CD4-positive, alpha-beta memory T cell (primary cell): ENCODE measurements at regions of chr5 and their contacts with region 1.

Region 1: DNA sequence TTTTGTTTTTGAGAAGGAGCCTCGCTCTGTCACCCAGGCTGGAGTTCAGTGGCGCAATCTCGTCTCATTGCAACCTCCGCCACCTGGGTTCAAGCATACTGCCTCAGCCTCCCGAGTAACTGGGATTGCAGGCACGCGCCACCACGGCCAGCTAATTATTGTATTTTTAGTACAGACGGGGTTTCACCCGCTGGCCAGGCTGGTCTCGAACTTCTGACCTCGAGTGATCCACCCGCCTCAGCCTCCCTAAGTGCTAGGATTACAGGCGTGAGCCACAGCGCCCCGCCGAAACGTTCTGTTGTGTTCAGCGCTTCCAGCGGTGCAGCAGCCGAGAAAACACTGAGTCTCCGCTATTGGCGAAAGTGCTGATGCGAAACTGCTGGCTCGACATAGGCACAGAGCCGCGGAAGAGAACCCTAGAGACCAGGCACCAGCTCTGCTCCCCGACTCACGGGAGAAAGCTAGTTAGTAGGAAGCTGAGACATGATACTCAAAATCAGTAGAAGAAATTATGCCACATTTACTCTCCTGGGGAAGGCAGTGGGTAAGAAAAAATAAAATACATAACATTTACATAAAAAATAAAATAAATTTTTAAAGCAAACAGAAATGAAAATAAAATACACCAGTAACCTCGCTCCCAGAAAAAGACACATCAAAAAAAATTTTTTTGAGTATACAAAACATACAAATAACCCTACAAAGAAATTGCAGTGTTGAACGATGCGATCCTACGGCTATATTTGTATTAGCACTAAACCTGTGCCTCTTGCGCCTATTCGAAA is 31.6 kb downstream of the ANXA2R start:
- DNase-seq: peak; percentile 89 to 92 (median 90)
- H3K4me3 ChIP-seq: peak overlapping the region; percentile 66 to 84
- H3K4me3 Mint-ChIP-seq: peak overlapping the region; percentile 84 to 94 (median 91)
- H3K27ac ChIP-seq: peak overlapping the region; percentile 85
- H3K27ac Mint-ChIP-seq: peak overlapping the region; percentile 90 to 99 (median 97)
- H3K4me1 ChIP-seq: peaks cover 38% of the 10 kb centered on the region
- H3K4me1 Mint-ChIP-seq: peaks cover 19 to 48% (median 33%) of the 10 kb centered on the region in 4 donors
- H3K27me3 ChIP-seq: no peaks in the 10 kb centered on the region
- H3K27me3 Mint-ChIP-seq: no peaks in the 10 kb centered on the region

Region 2: DNA sequence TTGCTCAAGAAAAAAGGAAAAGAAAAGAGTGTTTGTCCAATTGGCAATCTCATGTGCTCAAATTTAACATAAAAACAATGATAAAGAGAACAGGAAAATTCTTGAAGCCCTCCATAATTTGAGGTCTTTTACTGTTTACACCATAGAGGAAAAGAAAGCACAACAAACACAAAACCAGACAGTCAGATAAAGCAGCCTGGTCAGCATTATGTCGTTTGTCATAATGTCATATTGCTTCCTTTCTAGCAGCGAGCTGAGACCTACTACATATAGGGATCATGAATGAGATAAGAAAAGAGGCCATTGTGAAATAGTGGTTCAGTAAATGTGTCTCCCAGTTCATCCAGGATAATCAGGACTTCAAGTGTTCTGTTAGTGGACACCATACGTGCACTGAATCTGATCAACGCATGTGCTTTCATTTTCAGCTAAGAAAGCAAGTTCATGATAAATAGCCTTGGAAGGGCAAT is 132.2 kb before region 1 on chr5:
- CTCF ChIA-PET with region 1: no interaction called
- POLR2A ChIA-PET with region 1: no interaction called
- intact Hi-C with region 1: no loop called
- DNase-seq: no peak
- H3K4me3 ChIP-seq: no peak overlapping the region
- H3K4me3 Mint-ChIP-seq: peak overlapping the region in 4 of 8 donors; percentile 13 to 37 (median 34)
- H3K27ac ChIP-seq: no peak overlapping the region
- H3K27ac Mint-ChIP-seq: peak overlapping the region in 1 of 7 donors; percentile 42
- H3K4me1 ChIP-seq: peaks cover 8% of the 10 kb centered on the region
- H3K4me1 Mint-ChIP-seq: peaks cover 0 to 12% (median 6%) of the 10 kb centered on the region in 4 donors
- H3K27me3 ChIP-seq: no peaks in the 10 kb centered on the region
- H3K27me3 Mint-ChIP-seq: peaks cover 3 to 6% of the 10 kb centered on the region in 2 donors

Region 3: GRCh38 chr5:43019614-43020293 is 11.2 kb after region 1 on chr5:
- CTCF ChIA-PET with region 1: interaction called, 149 read pairs
- POLR2A ChIA-PET with region 1: interaction called, 893 read pairs
- intact Hi-C with region 1: loop called (anchors 1 kb)
- DNase-seq: peak; percentile 84 to 94 (median 91)
- H3K4me3 ChIP-seq: peak overlapping the region; percentile 73 to 83
- H3K4me3 Mint-ChIP-seq: peak overlapping the region; percentile 94 to 99 (median 98)
- H3K27ac ChIP-seq: peak overlapping the region; percentile 94
- H3K27ac Mint-ChIP-seq: peak overlapping the region; percentile 99 to 100 (median 100)
- H3K4me1 ChIP-seq: peaks cover 40% of the 10 kb centered on the region
- H3K4me1 Mint-ChIP-seq: peaks cover 24 to 67% (median 34%) of the 10 kb centered on the region in 4 donors
- H3K27me3 ChIP-seq: no peaks in the 10 kb centered on the region
- H3K27me3 Mint-ChIP-seq: no peaks in the 10 kb centered on the region

Region 4: GRCh38 chr5:43040287-43041098 is 31.9 kb after region 1 on chr5 and contains the start of gene ANXA2R:
- CTCF ChIA-PET with region 1: interaction called, 64 read pairs
- POLR2A ChIA-PET with region 1: interaction called, 1,197 read pairs
- intact Hi-C with region 1: loop called (anchors 1 kb)
- DNase-seq: peak; percentile 94 to 97 (median 97)
- H3K4me3 ChIP-seq: peak within 1 kb of the TSS; percentile 78 to 99
- H3K4me3 Mint-ChIP-seq: peak within 1 kb of the TSS; percentile 97 to 100 (median 98)
- H3K27ac ChIP-seq: peak within 1 kb of the TSS; percentile 98
- H3K27ac Mint-ChIP-seq: peak within 1 kb of the TSS; percentile 99 to 100 (median 99)
- H3K4me1 ChIP-seq: peaks cover 50% of the 10 kb centered on the region
- H3K4me1 Mint-ChIP-seq: peaks cover 19 to 82% (median 39%) of the 10 kb centered on the region in 4 donors
- H3K27me3 ChIP-seq: no peaks in the 10 kb centered on the region
- H3K27me3 Mint-ChIP-seq: no peaks in the 10 kb centered on the region
- total RNA-seq, gene ANXA2R: 43.4 to 47.8 TPM

Region 5: GRCh38 chr5:43110606-43111442 is 102.3 kb after region 1 on chr5:
- CTCF ChIA-PET with region 1: interaction called, 5 read pairs
- POLR2A ChIA-PET with region 1: interaction called, 10 read pairs
- intact Hi-C with region 1: no loop called
- DNase-seq: peak in 4 of 5 donors; percentile 26 to 55 (median 40)
- H3K4me3 ChIP-seq: no peak overlapping the region
- H3K4me3 Mint-ChIP-seq: peak overlapping the region; percentile 18 to 79 (median 62)
- H3K27ac ChIP-seq: peak overlapping the region; percentile 36
- H3K27ac Mint-ChIP-seq: peak overlapping the region; percentile 63 to 91 (median 87)
- H3K4me1 ChIP-seq: peaks cover 32% of the 10 kb centered on the region
- H3K4me1 Mint-ChIP-seq: peaks cover 17 to 34% (median 24%) of the 10 kb centered on the region in 4 donors
- H3K27me3 ChIP-seq: no peaks in the 10 kb centered on the region
- H3K27me3 Mint-ChIP-seq: no peaks in the 10 kb centered on the region